ENCODE measurements at regions of chr7 and their contacts with region 1.

Region 1: DNA sequence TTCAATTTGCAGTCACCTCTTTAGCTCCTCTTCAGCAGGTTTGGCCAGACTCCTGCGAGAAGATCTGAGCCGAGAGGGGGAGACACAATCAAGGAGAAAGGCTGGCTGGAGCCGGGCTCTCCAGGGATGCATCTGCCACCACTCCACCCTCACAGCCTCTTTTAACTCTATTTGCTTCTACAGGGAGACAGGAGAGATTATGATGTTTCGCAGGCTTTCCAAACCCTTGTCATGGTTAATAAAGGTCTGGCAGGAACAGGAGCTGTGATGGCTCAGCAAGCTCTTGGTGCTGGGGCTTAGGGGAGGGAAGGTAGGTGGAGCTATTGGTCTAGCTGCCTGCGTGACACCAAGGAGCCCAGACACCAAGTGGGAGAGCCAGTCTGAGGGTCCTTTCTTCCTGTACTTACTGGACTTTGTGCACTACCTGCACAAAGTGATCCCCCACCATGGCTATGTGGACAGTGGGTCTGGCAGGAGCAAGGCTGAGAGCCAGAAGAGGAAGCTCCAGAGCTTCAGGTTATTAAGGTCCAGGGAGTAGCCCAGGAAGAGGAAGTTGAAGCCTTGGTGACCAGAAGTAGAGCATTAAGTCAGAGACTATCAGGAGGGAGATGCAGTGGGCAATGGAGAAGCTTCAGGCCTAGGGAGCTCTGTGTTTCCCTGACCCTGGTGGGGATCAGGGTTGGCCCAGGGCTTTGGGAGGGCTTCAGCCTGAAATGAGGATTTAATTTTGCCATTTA is 448.3 kb upstream of the PODXL start:
- DNase-seq: no peak
- ATAC-seq: no peak
- H3K4me3 Mint-ChIP-seq: no peak overlapping the region
- H3K27ac Mint-ChIP-seq: no peak overlapping the region
- H3K4me1 Mint-ChIP-seq: no peaks in the 10 kb centered on the region
- H3K27me3 Mint-ChIP-seq: no peaks in the 10 kb centered on the region

Region 2: DNA sequence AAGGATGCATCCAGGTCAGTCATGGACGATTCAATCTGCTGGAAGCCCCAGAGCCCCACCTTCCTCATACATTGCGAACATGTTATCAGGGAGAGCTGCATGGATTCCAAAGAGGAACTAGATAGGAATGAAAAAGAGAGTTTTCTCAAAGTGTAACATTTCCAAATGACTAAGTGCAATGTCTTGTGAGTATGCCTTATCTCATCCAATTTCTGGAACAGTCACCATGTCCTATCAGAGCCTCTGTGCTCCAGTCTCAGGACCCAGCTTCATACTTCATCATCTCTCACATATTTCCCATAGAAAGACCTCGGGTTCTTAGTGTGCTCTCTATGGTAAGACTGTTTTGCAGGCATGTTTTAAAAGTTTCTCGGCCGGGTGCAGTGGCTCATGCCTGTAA is 1980.3 kb before region 1 on chr7:
- CTCF ChIA-PET with region 1: no interaction called
- POLR2A ChIA-PET with region 1: no interaction called
- intact Hi-C with region 1: no loop called
- DNase-seq: no peak
- ATAC-seq: no peak
- H3K4me3 Mint-ChIP-seq: no peak overlapping the region
- H3K27ac Mint-ChIP-seq: no peak overlapping the region
- H3K4me1 Mint-ChIP-seq: no peaks in the 10 kb centered on the region
- H3K27me3 Mint-ChIP-seq: no peaks in the 10 kb centered on the region

Region 3: DNA sequence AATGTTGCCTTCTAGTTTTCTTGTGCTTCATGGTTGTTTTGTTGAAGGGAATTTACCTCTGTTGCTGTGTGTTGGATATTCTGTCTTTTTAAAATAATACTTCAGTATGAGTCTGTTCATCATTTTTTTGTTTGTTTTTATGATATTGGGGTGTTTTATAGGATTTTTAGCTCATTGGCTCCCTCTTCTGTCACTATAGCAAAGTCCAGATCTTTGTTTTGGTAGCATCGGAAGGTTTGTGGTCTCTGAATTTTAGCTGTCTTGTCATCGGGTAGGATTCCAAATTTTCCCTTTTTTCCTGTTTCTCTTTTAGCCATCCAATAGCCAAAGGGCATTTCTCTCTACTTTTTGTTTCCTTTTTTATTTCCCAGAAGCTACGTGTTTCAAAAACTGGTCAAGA is 1339.6 kb after region 1 on chr7:
- CTCF ChIA-PET with region 1: no interaction called
- POLR2A ChIA-PET with region 1: no interaction called
- intact Hi-C with region 1: loop called in 1 of 2 experiments (anchors 10 kb)
- DNase-seq: no peak
- ATAC-seq: no peak
- H3K4me3 Mint-ChIP-seq: no peak overlapping the region
- H3K27ac Mint-ChIP-seq: no peak overlapping the region
- H3K4me1 Mint-ChIP-seq: peaks cover 8% of the 10 kb centered on the region
- H3K27me3 Mint-ChIP-seq: no peaks in the 10 kb centered on the region

Measured in activated CD4-positive, alpha-beta T cell treated with anti-CD3 and anti-CD28 coated beads for 36 hours (primary cell).